Naive thymus-derived CD4-positive, alpha-beta T cell (primary cell): ENCODE measurements at regions of chr4 and their contacts with region 1.

Region 1: DNA sequence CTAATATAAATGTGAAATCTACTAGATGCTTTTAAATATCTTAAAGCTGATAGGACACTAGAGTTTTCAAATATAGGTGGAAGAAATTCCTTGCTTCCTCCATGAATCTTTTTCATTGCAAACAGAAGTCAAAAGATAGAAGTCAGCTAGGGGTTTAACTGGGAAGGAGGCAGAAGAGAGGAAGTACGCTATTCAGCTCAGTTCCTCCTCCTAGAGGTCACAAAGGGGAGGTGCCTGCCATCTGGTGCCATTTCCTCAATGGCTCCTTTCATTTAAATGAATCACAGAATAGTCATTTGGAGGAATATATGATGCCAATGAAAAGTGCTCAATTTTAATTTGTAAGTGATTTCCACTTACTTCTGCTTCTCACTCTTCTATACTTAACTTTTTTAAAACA is 8.5 kb downstream of the COL25A1 start:
- DNase-seq: peak in 2 of 9 donors; percentile 11 to 13
- ATAC-seq: peak; percentile 70
- H3K4me3 ChIP-seq: no peak overlapping the region
- H3K4me3 Mint-ChIP-seq: no peak overlapping the region
- H3K27ac ChIP-seq: no peak overlapping the region
- H3K27ac Mint-ChIP-seq: no peak overlapping the region
- H3K4me1 ChIP-seq: no peaks in the 10 kb centered on the region
- H3K4me1 Mint-ChIP-seq: no peaks in the 10 kb centered on the region
- H3K27me3 ChIP-seq: no peaks in the 10 kb centered on the region
- H3K27me3 Mint-ChIP-seq: peaks cover 34 to 41% (median 37%) of the 10 kb centered on the region in 5 donors

Region 2: GRCh38 chr4:108313546-108314339 is 980.3 kb before region 1 on chr4:
- CTCF ChIA-PET with region 1: no interaction called
- POLR2A ChIA-PET with region 1: no interaction called
- intact Hi-C with region 1: no loop called
- DNase-seq: no peak
- ATAC-seq: no peak
- H3K4me3 ChIP-seq: no peak overlapping the region
- H3K4me3 Mint-ChIP-seq: peak overlapping the region in 6 of 10 donors; percentile 50 to 84 (median 76)
- H3K27ac ChIP-seq: no peak overlapping the region
- H3K27ac Mint-ChIP-seq: peak overlapping the region in 5 of 9 donors; percentile 14 to 89 (median 74)
- H3K4me1 ChIP-seq: peaks cover 0 to 33% of the 10 kb centered on the region in 2 donors
- H3K4me1 Mint-ChIP-seq: peaks cover 23 to 63% (median 57%) of the 10 kb centered on the region in 7 donors
- H3K27me3 ChIP-seq: no peaks in the 10 kb centered on the region
- H3K27me3 Mint-ChIP-seq: peaks cover 0 to 28% (median 0%) of the 10 kb centered on the region in 5 donors

Region 3: GRCh38 chr4:108751321-108751720 is 542.7 kb before region 1 on chr4:
- CTCF ChIA-PET with region 1: no interaction called
- POLR2A ChIA-PET with region 1: no interaction called
- intact Hi-C with region 1: no loop called
- DNase-seq: no peak
- ATAC-seq: no peak
- H3K4me3 ChIP-seq: no peak overlapping the region
- H3K4me3 Mint-ChIP-seq: no peak overlapping the region
- H3K27ac ChIP-seq: no peak overlapping the region
- H3K27ac Mint-ChIP-seq: no peak overlapping the region
- H3K4me1 ChIP-seq: peaks cover 0 to 4% of the 10 kb centered on the region in 2 donors
- H3K4me1 Mint-ChIP-seq: peaks cover 0 to 5% (median 3%) of the 10 kb centered on the region in 7 donors
- H3K27me3 ChIP-seq: no peaks in the 10 kb centered on the region
- H3K27me3 Mint-ChIP-seq: peaks cover 0 to 23% (median 3%) of the 10 kb centered on the region in 5 donors

Region 4: DNA sequence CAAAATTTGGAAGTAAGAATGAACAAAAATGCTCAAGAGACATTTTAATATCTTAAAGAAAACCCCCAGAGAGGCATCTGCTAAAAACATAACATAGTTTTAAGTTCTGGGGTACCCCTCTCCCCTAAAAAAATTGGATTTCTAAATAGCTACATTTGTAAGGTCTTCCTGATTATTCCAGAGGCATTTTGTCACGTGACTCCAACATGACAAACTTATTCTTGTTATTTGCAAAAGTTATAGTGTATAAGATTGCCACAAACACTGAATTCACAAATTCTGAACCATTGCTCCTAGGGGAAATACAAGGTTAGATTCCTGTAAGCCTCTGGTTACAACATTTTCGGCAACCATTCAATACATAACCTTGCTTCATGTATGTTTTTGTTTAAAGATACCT is 65.0 kb before region 1 on chr4:
- CTCF ChIA-PET with region 1: no interaction called
- POLR2A ChIA-PET with region 1: no interaction called
- intact Hi-C with region 1: no loop called
- DNase-seq: no peak
- ATAC-seq: no peak
- H3K4me3 ChIP-seq: no peak overlapping the region
- H3K4me3 Mint-ChIP-seq: no peak overlapping the region
- H3K27ac ChIP-seq: no peak overlapping the region
- H3K27ac Mint-ChIP-seq: no peak overlapping the region
- H3K4me1 ChIP-seq: no peaks in the 10 kb centered on the region
- H3K4me1 Mint-ChIP-seq: no peaks in the 10 kb centered on the region
- H3K27me3 ChIP-seq: no peaks in the 10 kb centered on the region
- H3K27me3 Mint-ChIP-seq: peaks cover 0 to 12% (median 0%) of the 10 kb centered on the region in 5 donors

Region 5: DNA sequence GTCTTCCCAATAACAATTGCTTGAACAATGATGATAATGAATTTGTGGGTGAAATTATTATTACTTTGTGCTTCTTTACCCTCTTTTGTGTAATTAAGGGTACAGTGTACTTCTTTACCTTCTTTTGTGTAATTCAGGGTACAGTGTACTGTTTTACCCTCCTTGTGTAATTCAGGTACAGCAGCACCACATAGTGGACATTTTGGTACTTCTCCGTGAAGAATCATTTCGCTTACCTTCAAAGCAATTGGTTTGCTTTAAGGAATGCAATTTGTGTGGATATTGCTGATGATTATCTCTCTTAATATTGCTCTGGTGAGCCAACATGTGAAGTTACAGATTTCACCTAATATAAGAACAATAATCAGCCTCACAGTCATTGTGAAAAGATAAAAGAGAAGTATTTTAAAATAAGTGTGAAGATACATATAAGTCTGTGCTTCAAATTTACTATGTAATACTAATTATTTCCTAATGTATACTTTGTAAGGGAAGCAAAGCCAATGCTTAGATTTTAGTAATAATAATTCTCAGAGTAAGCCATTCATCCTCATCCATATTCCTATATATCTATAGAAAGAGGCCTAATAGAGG is 112.4 kb after region 1 on chr4:
- CTCF ChIA-PET with region 1: no interaction called
- POLR2A ChIA-PET with region 1: no interaction called
- intact Hi-C with region 1: loop called in 1 of 2 experiments (anchors 2 kb)
- DNase-seq: peak in 7 of 9 donors; percentile 21 to 63 (median 42)
- ATAC-seq: peak; percentile 79
- H3K4me3 ChIP-seq: no peak overlapping the region
- H3K4me3 Mint-ChIP-seq: no peak overlapping the region
- H3K27ac ChIP-seq: no peak overlapping the region
- H3K27ac Mint-ChIP-seq: no peak overlapping the region
- H3K4me1 ChIP-seq: no peaks in the 10 kb centered on the region
- H3K4me1 Mint-ChIP-seq: no peaks in the 10 kb centered on the region
- H3K27me3 ChIP-seq: no peaks in the 10 kb centered on the region
- H3K27me3 Mint-ChIP-seq: peaks cover 0 to 27% (median 0%) of the 10 kb centered on the region in 5 donors